Activated CD4-positive, alpha-beta T cell treated with anti-CD3 and anti-CD28 coated beads, Interleukin-2, amount 10 ng/mL, durations not matched to agents 24 days and 14 days (primary cell): ENCODE measurements at regions of chr13 and their contacts with region 1.

Region 1: GRCh38 chr13:77386880-77387606 is 60.1 kb upstream of the MYCBP2 start:
- DNase-seq: no peak
- H3K4me3 Mint-ChIP-seq: no peak overlapping the region
- H3K27ac Mint-ChIP-seq: no peak overlapping the region
- H3K4me1 Mint-ChIP-seq: peaks cover 5% of the 10 kb centered on the region
- H3K27me3 Mint-ChIP-seq: peaks cover 43% of the 10 kb centered on the region

Region 2: DNA sequence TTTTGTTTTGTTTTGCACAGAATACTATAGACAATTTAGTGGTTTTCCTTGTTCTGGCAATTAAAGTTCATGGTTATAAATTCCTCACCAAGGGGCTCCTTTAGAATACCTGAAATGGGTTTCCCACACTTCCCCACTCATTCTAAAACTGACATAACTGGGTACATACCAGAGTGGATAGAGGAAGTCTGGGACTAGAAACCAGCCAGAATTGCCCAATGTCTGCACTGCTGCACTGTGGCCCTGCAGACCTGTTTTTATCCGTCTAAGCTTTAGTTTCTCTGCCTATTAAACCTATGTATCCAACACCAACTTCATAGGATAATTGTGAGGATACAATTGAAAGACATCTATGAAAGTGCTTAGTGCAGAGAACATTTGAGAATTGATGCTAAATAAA is 999.5 kb before region 1 on chr13:
- intact Hi-C with region 1: no loop called
- DNase-seq: no peak
- H3K4me3 Mint-ChIP-seq: no peak overlapping the region
- H3K27ac Mint-ChIP-seq: no peak overlapping the region
- H3K4me1 Mint-ChIP-seq: no peaks in the 10 kb centered on the region
- H3K27me3 Mint-ChIP-seq: no peaks in the 10 kb centered on the region

Region 3: DNA sequence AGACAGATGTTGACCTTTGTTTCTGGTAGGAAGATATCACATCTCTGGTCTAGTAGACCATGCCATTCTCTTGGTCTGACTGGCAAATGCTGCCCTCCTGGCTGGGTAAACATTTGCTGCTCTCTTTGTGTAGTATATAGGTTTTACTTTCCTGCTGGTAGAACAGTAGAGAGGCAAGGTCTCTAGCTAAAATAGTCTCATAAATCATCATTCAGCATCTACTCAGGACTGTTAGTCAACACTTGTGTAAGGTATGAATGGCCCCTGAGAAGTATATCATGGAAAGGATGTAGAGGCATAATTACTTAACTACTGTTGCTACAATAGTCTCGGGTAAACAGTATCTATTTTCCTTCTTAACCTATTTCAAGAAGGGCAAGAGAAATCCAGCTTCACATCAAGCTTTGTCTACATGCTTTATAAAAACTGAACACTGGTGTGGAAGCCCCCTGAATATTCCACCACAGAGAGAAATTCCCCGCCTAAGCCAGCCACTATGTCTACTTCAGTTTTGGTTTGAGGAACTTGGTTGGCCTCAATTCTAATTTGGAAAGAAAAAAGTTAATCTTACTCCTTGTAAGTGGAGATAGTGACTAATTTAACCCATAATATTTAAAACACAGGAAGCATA is 41.8 kb before region 1 on chr13:
- intact Hi-C with region 1: loop called (anchors 5 kb)
- DNase-seq: peak; percentile 57
- H3K4me3 Mint-ChIP-seq: peak overlapping the region; percentile 36
- H3K27ac Mint-ChIP-seq: peak overlapping the region; percentile 89
- H3K4me1 Mint-ChIP-seq: peaks cover 8% of the 10 kb centered on the region
- H3K27me3 Mint-ChIP-seq: no peaks in the 10 kb centered on the region

Region 4: DNA sequence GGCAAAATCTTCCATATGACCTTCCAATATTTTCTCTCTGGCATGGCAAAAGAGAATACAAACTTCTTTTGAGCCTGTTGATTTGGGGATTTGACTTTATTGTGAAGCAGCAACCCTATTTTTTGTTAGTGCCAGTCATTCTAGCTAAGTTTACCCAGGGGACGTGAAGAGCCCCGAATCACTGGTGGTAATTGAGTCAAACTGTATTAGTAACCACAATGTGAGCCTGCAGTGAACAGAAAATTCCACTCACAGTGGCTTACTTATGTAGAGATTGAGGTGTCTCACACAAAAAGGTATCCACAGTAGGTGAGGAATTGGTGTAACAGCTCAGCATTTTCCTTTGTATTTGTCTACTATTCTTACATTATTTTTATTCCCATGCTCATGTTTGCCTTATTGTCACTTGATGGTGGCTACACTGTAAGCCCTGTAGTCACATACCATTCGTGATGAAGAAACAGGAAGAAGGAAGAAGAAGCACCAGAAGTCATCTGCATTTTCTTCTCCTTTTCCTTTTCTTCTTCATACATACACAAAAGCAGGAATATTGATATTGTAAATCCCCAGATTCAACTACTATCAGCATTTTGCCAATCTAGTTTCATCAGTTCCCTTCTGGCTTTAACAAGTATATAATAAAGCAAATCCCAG is 26.9 kb before region 1 on chr13:
- intact Hi-C with region 1: no loop called
- DNase-seq: no peak
- H3K4me3 Mint-ChIP-seq: no peak overlapping the region
- H3K27ac Mint-ChIP-seq: no peak overlapping the region
- H3K4me1 Mint-ChIP-seq: no peaks in the 10 kb centered on the region
- H3K27me3 Mint-ChIP-seq: peaks cover 5% of the 10 kb centered on the region